AG04449 (cell line): ENCODE measurements at regions of chr17 and their contacts with region 1.

Region 1: GRCh38 chr17:81294856-81295680 is at the start of gene SLC38A10:
- DNase-seq: no peak
- H3K4me3 ChIP-seq: peak within 1 kb of the TSS; percentile 85
- CTCF ChIP-seq: no peak

Region 2: DNA sequence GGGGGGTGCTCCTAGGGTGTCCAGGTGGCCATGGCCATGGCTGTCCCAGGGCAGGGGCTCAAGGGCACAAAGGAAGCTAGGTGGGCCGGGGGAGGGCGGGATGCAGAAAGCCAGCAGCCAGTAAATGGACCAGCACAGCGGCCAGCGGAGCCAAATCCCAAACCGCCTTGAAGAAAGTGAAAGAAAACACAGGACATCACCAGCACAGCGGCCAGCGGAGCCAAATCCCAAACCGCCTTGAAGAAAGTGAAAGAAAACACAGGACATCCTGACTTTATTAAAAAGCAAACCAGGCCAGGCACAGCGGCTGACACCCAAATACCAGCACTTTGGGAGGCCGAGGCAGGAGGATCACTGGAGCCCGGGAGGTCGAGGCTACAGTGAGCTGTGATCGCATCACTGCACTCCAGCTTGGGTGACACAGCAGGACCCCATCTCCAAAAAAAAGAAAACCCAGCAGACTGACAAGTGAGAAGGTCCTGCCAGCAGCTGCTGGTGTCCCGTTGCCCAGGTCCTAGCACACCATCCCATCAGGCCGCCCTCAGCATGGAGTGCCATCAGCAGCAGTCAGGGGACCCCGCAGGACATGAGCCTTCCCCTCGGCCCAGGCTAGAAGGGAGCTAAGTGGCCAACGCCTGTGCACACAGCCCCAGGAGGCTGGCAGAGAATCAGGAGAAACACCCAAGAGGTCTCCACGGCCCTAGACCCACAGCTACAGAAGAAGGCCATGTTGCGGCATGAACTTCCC is 16.9 kb before region 1 on chr17:
- CTCF ChIA-PET with region 1: interaction called, 22 read pairs
- POLR2A ChIA-PET with region 1: no interaction called
- DNase-seq: no peak
- H3K4me3 ChIP-seq: no peak overlapping the region
- CTCF ChIP-seq: no peak

Region 3: GRCh38 chr17:81309070-81309905 is 14.2 kb after region 1 on chr17:
- CTCF ChIA-PET with region 1: interaction called, 17 read pairs
- POLR2A ChIA-PET with region 1: no interaction called
- DNase-seq: no peak
- H3K4me3 ChIP-seq: no peak overlapping the region
- CTCF ChIP-seq: peak; percentile 64

Region 4: DNA sequence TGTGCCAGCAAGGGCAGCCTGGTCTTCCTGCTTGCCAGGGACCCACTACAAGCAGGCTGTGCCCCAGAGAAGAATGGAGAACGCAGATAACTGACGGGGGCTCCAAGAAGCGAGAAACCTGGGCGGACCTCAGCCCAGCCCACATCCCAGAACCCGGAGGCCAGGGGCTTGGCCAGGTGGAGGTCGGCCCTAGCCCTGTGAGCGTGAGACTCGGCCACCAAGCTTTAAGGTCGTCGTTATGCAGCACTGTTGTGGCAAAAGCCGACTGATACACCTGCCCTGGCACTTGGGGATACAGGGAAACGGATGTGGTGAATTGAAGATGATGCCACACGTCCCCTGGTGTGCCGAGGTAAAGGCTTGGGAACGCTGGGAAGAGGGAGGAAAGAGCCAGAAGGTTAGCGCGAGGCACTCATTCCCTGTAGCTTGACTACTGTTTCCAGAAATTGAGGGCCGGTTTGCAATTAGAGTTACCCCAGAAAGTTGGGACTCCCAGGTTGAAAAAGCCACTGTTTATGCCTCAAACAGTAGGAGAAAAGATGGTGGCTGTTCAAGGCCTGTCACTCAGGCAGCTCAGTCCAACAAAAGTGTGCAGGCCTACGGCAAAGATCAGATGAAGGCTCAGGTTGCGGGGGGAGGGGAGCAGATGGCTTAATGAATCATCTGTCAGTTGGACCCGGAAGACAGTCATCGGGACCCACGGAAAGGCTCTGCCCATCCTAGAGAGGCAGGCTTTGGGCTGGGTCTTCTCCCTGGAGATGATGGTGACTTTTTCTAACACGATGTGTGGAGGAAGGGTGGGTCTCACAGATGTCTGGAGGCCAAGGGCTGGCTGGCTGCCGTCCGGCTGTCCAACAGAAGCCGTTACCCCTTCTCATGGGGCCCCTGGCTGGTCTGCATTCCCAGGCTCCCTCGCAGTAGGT is 54.6 kb after region 1 on chr17:
- CTCF ChIA-PET with region 1: no interaction called
- POLR2A ChIA-PET with region 1: no interaction called
- DNase-seq: no peak
- H3K4me3 ChIP-seq: no peak overlapping the region
- CTCF ChIP-seq: no peak

Region 5: GRCh38 chr17:81401723-81402529 is 106.9 kb after region 1 on chr17:
- CTCF ChIA-PET with region 1: interaction called, 11 read pairs
- POLR2A ChIA-PET with region 1: interaction called, 3 read pairs
- DNase-seq: no peak
- H3K4me3 ChIP-seq: peak overlapping the region; percentile 36
- CTCF ChIP-seq: peak; percentile 60

Region 6: DNA sequence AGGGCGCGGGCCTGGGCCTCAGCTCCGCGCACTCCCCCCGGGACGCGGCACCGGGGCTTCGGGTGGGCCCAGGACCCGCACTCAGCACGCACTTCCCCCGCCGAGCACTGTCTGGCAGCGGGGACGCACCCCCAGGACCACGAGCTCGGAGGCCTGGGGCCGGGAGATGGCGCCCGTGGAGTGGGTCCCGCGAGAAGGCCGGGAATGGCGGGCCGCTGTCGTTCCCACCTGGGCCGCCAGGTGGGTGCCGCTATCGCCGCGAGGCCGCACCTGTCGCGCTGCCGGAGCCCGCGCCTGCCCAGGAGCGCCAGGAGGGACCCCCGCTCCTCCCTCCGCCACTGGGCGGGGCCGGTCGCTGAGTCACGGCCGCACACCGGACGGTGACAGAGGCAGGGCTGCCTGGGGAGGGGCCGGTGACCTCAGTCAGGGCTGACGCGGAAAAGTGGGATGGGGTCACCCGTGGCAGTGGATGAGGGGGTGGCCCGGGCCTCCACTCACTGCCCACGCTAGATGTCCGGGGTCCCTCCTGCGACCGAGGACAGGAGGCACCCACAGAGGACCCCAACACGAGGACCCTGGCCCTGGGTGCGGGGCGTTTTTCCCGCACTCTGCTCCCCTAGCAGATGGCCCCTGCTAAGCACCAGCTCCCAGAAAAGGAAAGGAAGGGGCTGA is 224.4 kb after region 1 on chr17:
- CTCF ChIA-PET with region 1: no interaction called
- POLR2A ChIA-PET with region 1: no interaction called
- DNase-seq: no peak
- H3K4me3 ChIP-seq: peak overlapping the region; percentile 52
- CTCF ChIP-seq: peak; percentile 28